ENCODE measurements at regions of chr5 and their contacts with region 1.

Region 1: DNA sequence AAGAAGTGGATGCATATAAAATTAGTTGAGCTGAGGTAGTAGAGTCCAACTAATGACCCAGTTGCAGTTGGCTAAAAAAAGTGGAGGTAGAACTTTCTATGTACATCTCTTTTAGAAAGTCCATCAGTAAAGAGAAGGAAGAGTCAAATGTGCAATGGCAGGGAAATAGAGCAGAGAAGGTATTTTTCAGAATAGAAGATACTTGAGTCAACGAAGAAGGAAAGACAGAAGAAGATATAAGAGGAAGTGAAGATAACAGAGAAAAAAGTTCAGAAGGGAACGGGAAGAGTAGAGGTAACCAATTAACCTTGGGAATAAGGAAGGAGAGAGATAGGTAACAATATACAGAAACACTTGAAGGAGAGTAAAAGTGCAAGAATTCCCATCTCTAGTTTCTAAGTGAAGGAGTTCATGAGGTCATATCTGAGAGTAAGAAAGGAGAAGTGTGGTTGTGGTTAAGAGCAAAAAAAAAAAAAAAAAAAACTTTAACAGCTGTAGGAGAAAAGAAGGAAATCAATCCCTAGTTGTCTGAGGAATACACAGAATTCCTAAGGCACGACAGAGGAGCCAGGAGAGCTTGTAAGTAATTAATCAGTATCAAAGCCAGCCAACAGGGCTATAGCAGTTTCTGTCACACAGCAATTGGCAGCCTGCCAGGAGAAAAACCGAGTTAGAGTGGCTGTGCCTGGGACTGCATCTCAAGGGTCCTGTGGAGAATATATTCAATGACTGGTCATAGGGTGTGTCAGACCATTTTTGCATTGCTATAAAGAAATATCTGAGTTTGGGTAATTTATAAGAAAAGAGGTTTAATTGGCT is 61.0 kb downstream of the ARL15 start:
- DNase-seq: peak; percentile 10
- H3K4me3 ChIP-seq: no peak overlapping the region
- H3K27ac ChIP-seq: no peak overlapping the region
- H3K4me1 ChIP-seq: no peaks in the 10 kb centered on the region
- H3K27me3 ChIP-seq: no peaks in the 10 kb centered on the region
- CTCF ChIP-seq: no peak
- POLR2A ChIP-seq: no peak

Region 2: DNA sequence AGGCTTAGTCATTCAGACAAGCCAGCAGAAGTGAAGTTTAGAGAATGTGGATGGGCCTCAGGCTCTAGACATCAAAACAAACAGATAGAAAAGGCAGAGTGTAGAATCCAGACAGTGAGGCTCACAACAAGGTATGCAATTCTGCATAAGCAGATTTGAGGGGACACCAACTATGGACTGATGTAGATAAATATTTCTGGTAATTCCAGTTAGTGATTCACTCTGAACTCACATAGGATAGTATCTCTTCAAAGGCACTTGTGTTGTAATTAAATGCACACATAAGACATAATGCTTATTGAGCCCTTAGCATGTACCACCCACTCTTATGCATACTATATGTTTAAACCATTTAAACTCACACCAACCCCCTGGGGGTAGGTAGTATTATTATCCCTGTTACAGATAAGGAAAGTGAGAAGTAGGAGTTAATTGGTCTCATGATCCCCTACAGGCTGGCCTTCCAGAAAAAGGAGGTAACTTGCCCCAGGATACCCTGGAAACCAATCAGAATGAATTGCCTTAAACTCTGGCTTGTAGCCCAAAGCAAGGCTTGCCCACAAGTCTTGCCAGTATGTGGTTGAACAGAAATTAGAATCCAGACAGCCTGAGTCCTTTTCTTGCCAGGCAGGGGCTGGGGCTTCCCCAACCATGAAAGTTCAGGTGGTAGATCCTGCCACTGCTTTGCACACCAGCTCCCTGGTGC is 166.6 kb after region 1 on chr5:
- intact Hi-C with region 1: loop called (anchors 2 kb)
- DNase-seq: no peak
- H3K4me3 ChIP-seq: no peak overlapping the region
- H3K27ac ChIP-seq: no peak overlapping the region
- H3K4me1 ChIP-seq: no peaks in the 10 kb centered on the region
- H3K27me3 ChIP-seq: no peaks in the 10 kb centered on the region
- CTCF ChIP-seq: no peak
- POLR2A ChIP-seq: no peak

Region 3: GRCh38 chr5:54492178-54492577 is 242.8 kb after region 1 on chr5:
- intact Hi-C with region 1: loop called (anchors 5 kb)
- DNase-seq: no peak
- H3K4me3 ChIP-seq: no peak overlapping the region
- H3K27ac ChIP-seq: no peak overlapping the region
- H3K4me1 ChIP-seq: no peaks in the 10 kb centered on the region
- H3K27me3 ChIP-seq: no peaks in the 10 kb centered on the region
- CTCF ChIP-seq: no peak
- POLR2A ChIP-seq: no peak

Region 4: GRCh38 chr5:54637654-54638053 is 388.2 kb after region 1 on chr5:
- intact Hi-C with region 1: no loop called
- DNase-seq: no peak
- H3K4me3 ChIP-seq: no peak overlapping the region
- H3K27ac ChIP-seq: no peak overlapping the region
- H3K4me1 ChIP-seq: no peaks in the 10 kb centered on the region
- H3K27me3 ChIP-seq: no peaks in the 10 kb centered on the region
- CTCF ChIP-seq: no peak
- POLR2A ChIP-seq: no peak

Region 5: GRCh38 chr5:54718656-54719055 is 469.2 kb after region 1 on chr5:
- intact Hi-C with region 1: no loop called
- DNase-seq: no peak
- H3K4me3 ChIP-seq: no peak overlapping the region
- H3K27ac ChIP-seq: no peak overlapping the region
- H3K4me1 ChIP-seq: no peaks in the 10 kb centered on the region
- H3K27me3 ChIP-seq: no peaks in the 10 kb centered on the region
- CTCF ChIP-seq: no peak
- POLR2A ChIP-seq: no peak

Region 6: GRCh38 chr5:54883374-54884212 is 634.2 kb after region 1 on chr5:
- intact Hi-C with region 1: loop called (anchors 10 kb)
- DNase-seq: peak; percentile 57
- H3K4me3 ChIP-seq: peak overlapping the region; percentile 35 to 37
- H3K27ac ChIP-seq: no peak overlapping the region
- H3K4me1 ChIP-seq: no peaks in the 10 kb centered on the region
- H3K27me3 ChIP-seq: no peaks in the 10 kb centered on the region
- CTCF ChIP-seq: no peak
- POLR2A ChIP-seq: no peak